ENCODE measurements at regions of chr12 and their contacts with region 1.

Region 1: GRCh38 chr12:90987520-90987919 is 17.3 kb downstream of the EPYC start:
- DNase-seq: no peak
- ATAC-seq: no peak
- H3K4me3 ChIP-seq: no peak overlapping the region
- H3K27ac ChIP-seq: no peak overlapping the region
- H3K4me1 ChIP-seq: no peaks in the 10 kb centered on the region
- H3K27me3 ChIP-seq: no peaks in the 10 kb centered on the region
- CTCF ChIP-seq: no peak

Region 2: GRCh38 chr12:90868626-90869025 is 118.9 kb before region 1 on chr12:
- intact Hi-C with region 1: no loop called
- DNase-seq: no peak
- ATAC-seq: no peak
- H3K4me3 ChIP-seq: no peak overlapping the region
- H3K27ac ChIP-seq: no peak overlapping the region
- H3K4me1 ChIP-seq: no peaks in the 10 kb centered on the region
- H3K27me3 ChIP-seq: no peaks in the 10 kb centered on the region
- CTCF ChIP-seq: no peak

Region 3: DNA sequence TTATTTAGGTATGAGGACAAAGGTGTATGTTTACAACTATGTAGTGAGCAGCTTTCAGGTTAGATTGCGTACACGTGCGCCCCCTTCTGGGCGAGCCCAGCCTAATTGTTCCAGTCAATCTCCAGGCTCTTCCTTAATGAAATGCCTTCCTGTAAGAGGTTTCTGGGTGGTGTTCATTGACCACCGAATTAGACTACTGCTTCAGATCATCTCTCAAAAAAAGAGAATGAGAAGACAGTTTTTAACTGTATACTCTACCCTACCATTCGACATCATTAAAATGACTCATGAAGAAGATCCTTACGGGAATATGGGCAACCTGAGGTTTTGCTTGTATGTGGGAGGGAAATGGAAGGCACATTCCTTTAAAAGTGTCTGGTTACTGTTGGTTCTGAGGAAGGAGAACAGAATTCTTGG is 121.6 kb after region 1 on chr12:
- intact Hi-C with region 1: loop called in 1 of 3 experiments (anchors 10 kb)
- DNase-seq: peak; percentile 35 to 88 (median 66)
- ATAC-seq: peak; percentile 56 to 90 (median 86)
- H3K4me3 ChIP-seq: no peak overlapping the region
- H3K27ac ChIP-seq: no peak overlapping the region
- H3K4me1 ChIP-seq: no peaks in the 10 kb centered on the region
- H3K27me3 ChIP-seq: no peaks in the 10 kb centered on the region
- CTCF ChIP-seq: peak; percentile 46 to 72 (median 59)

Region 4: GRCh38 chr12:91422801-91423688 is 435.5 kb after region 1 on chr12:
- intact Hi-C with region 1: no loop called
- DNase-seq: no peak
- ATAC-seq: no peak
- H3K4me3 ChIP-seq: no peak overlapping the region
- H3K27ac ChIP-seq: no peak overlapping the region
- H3K4me1 ChIP-seq: no peaks in the 10 kb centered on the region
- H3K27me3 ChIP-seq: no peaks in the 10 kb centered on the region
- CTCF ChIP-seq: no peak